ENCODE measurements at regions of chr2 and their contacts with region 1.

Region 1: DNA sequence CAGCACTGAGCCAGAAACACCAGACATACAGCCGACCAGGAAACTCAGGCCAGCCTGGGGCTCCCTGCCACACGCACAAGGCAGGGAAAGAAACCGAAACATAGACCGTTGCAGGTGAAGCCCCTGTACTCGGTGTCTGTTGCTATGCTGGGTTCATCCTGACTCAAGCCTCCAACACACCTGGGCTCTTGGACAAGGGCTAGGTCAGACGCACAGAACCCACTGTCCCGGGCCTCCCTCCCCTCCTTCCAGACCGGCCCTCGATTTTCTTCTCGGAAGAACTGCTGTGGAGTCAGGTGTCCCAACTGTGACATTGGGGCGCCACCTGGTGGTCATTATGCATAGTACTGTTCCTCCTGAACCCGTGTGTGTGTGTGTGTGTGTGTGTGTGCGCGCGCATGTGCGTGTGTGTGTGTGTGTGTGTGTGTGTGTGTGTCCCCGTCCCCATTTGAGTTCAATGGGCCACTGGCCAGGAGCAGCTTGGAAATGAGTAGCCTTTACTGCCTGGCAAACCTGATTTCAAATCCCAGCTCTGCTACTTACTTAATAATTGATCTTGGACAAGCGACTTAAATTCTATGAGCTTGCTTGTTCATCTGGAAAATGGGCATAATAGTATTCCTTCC is 55.4 kb upstream of the GLI2 start:
- DNase-seq: peak; percentile 90
- H3K4me3 ChIP-seq: no peak overlapping the region
- H3K27ac ChIP-seq: no peak overlapping the region
- H3K4me1 ChIP-seq: peaks cover 0 to 27% (median 24%) of the 10 kb centered on the region in 4 donors
- H3K27me3 ChIP-seq: peaks cover 0 to 11% (median under 1%) of the 10 kb centered on the region in 3 donors
- CTCF ChIP-seq: peak; percentile 52 to 89 (median 81)
- EP300 ChIP-seq: no peak
- POLR2A ChIP-seq: no peak

Region 2: GRCh38 chr2:120287183-120288015 is 392.9 kb before region 1 on chr2:
- intact Hi-C with region 1: no loop called
- DNase-seq: no peak
- H3K4me3 ChIP-seq: no peak overlapping the region
- H3K27ac ChIP-seq: no peak overlapping the region
- H3K4me1 ChIP-seq: no peaks in the 10 kb centered on the region
- H3K27me3 ChIP-seq: no peaks in the 10 kb centered on the region
- CTCF ChIP-seq: no peak
- EP300 ChIP-seq: no peak
- POLR2A ChIP-seq: no peak

Region 3: GRCh38 chr2:120552800-120553481 is 127.3 kb before region 1 on chr2:
- intact Hi-C with region 1: loop called (anchors 5 kb)
- DNase-seq: peak; percentile 85
- H3K4me3 ChIP-seq: no peak overlapping the region
- H3K27ac ChIP-seq: peak overlapping the region in 1 of 4 donors; percentile 55
- H3K4me1 ChIP-seq: peaks cover 0 to 25% (median 19%) of the 10 kb centered on the region in 4 donors
- H3K27me3 ChIP-seq: no peaks in the 10 kb centered on the region
- CTCF ChIP-seq: peak; percentile 6 to 48 (median 36)
- EP300 ChIP-seq: no peak
- POLR2A ChIP-seq: no peak

Region 4: GRCh38 chr2:120825370-120826259 is 145.4 kb after region 1 on chr2:
- intact Hi-C with region 1: no loop called
- DNase-seq: peak; percentile 90
- H3K4me3 ChIP-seq: no peak overlapping the region
- H3K27ac ChIP-seq: peak overlapping the region; percentile 56 to 83 (median 79)
- H3K4me1 ChIP-seq: peaks cover 0 to 60% (median 44%) of the 10 kb centered on the region in 4 donors
- H3K27me3 ChIP-seq: no peaks in the 10 kb centered on the region
- CTCF ChIP-seq: no peak
- EP300 ChIP-seq: no peak
- POLR2A ChIP-seq: no peak

Measured in sigmoid colon (tissue), 7 donors.